ENCODE measurements at regions of chr2 and their contacts with region 1.

Region 1: DNA sequence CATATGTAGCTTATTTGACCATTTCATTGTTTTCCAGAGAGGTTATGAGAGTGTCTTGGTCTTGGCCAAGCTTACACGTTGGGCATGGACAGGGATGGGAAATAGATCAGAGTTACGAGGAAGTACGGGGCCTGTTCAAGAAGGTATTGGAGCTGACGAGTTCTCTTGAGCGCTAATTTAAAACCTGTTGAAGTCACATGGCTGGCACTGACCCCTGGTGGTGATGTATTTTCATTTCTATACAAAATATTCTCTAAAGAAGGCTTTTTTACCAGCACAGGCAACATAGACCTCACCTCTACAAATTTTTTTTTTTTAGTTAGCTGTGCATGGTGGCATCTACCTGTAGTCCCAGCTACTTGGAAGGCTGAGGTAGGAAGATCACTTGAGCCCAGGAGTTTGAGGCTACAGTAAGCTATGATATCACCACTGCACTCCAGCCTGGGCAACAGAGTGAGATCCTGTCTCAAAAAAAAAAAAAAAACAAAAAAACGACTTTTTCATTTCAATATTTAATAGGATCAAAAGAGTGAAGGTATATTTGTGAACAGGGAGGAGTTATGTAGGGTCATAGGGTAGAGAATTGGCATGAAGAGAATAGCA is 19.6 kb downstream of the UGP2 start:
- DNase-seq: no peak
- H3K4me3 ChIP-seq: no peak overlapping the region
- CTCF ChIP-seq: peak; percentile 21

Region 2: DNA sequence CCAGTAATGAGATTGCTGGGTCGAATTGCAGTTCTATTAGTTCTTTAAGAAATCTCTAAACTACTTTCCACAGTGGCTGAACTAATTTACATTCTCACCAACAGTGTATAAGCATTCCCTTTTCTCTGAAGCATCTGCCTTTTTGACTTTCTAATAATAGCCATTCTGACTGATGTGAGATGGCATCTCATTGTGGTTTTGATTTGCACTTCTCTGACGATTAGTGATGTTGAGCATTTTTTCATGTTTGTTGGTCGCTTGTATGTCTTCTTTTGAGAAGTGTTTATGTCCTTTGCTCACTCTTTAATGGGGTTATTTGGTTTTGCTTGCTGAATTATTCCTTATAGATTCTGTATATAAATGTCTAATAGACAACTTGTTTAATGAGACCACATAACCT is 89.3 kb before region 1 on chr2:
- CTCF ChIA-PET with region 1: no interaction called
- POLR2A ChIA-PET with region 1: no interaction called
- DNase-seq: no peak
- H3K4me3 ChIP-seq: no peak overlapping the region
- CTCF ChIP-seq: no peak

Region 3: DNA sequence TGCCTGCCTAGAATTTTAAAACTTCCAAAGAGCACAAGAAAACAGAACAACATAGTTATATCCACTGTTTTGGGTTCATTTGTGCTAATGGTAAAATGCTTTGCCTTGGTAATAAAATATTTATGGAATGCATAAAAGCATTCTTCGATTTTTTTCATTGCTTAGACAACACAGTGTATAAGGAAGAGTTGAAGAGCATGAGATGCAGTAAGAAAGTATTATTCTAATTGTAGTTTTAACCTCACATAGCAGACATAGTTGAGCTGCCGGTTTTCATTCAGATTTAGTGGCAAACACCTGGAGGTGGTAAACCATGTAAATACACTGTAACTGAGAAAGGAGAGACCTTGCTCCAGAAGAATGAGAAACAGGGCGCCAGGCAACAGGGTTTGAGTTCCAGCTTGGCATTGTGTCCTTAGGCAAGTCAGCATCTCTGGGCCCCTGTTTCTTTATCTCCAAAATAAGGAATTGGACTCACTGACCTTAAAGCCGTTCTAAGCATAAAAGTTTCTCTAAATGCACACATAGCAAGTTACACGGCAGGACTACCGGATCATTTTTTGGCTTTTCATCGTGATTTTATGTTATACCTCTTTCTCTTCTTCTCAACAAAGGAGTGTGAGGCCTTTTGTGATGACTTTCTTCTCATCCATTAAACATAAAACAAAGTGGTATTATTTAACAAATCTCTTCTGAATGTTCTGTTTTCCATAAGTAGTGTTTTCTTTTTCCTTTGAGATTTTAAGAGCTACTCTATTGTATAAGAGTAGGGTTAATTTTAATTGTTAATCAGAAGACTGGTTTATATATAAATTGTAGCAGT is 11.7 kb before region 1 on chr2:
- CTCF ChIA-PET with region 1: interaction called, 25 read pairs
- POLR2A ChIA-PET with region 1: no interaction called
- DNase-seq: no peak
- H3K4me3 ChIP-seq: no peak overlapping the region
- CTCF ChIP-seq: no peak

Region 4: DNA sequence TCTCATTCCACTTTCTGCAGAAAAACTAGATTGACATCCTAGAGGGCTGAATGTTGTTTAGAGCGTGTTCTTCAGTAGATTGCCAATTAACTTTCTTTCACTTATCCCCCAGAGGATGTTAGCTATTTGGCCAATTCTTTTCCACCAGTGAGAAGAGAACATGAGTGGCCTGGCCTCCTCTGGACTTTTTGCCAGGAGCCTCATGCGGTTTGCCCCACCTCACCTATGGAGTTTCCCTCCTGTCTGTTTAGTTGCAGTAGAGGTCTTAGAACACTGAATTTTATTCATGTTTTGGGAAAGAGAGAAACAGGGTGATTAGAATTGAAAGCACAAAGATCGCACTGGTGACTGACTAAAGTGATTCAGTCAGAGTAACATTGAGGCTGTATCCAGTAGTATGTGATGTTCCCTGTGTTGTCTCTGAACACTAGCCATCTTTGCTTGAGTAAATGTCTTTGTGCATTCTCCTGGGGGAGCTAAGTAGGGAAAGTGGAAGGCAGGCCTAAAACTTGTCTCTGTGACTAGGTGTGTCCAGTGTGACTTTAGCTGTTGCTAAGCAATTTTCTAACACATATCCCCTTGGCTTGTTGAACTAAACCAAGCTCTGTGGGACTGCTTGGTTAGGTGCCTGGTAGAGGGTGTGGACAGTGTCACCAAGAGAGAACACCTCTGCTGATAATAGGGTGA is 14.4 kb after region 1 on chr2:
- CTCF ChIA-PET with region 1: interaction called, 27 read pairs
- POLR2A ChIA-PET with region 1: interaction called, 3 read pairs
- DNase-seq: no peak
- H3K4me3 ChIP-seq: no peak overlapping the region
- CTCF ChIP-seq: no peak